Mammary epithelial cell (primary cell): ENCODE measurements at regions of chr5 and their contacts with region 1.

Region 1: GRCh38 chr5:132426525-132427138 is 57.1 kb downstream of the SLC22A5 start:
- DNase-seq: peak; percentile 95
- H3K4me3 ChIP-seq: no peak overlapping the region
- H3K27ac ChIP-seq: peak overlapping the region; percentile 92
- H3K4me1 ChIP-seq: peaks cover 63% of the 10 kb centered on the region
- H3K27me3 ChIP-seq: no peaks in the 10 kb centered on the region
- CTCF ChIP-seq: peak; percentile 27 to 44

Region 2: DNA sequence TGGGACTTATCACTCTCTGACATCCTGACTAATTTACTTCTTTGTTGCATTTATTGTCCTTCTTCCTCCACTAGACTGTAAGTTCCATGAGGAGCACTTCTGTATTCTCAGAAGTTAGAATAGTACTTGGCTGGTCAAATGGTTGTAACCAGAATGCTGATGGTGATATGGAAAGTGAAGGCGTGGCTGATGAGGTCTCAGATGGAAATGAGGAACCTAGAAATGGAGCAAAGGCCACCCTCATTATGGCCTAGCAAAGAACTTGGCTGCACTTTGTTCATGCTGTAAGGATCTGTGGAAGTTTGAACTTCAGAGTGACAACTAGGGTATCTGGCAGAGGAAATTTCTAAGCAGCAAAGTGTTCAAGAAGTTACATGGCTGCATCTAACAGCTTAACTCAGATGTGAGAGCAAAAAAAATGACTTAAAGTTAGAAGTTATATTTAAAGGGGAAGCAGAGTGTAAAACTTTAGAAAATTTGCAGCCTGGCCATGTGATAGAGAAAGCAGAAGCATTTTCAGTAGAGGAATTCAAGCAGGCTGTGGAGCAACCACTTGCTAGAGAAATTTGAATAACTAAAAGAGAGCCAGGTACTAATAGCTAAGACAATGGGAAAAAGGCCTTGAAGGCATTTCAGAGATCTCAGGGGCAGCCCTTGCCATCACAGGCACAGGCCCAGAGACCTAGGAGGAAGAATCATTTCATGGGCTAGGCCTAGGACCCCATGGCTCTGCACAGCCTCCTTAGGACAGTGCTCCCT is 72.1 kb before region 1 on chr5:
- CTCF ChIA-PET with region 1: no interaction called
- dilution Hi-C with region 1: no loop called
- in situ Hi-C with region 1: no loop called
- intact Hi-C with region 1: no loop called
- DNase-seq: no peak
- H3K4me3 ChIP-seq: no peak overlapping the region
- H3K27ac ChIP-seq: no peak overlapping the region
- H3K4me1 ChIP-seq: no peaks in the 10 kb centered on the region
- H3K27me3 ChIP-seq: no peaks in the 10 kb centered on the region
- CTCF ChIP-seq: no peak

Region 3: DNA sequence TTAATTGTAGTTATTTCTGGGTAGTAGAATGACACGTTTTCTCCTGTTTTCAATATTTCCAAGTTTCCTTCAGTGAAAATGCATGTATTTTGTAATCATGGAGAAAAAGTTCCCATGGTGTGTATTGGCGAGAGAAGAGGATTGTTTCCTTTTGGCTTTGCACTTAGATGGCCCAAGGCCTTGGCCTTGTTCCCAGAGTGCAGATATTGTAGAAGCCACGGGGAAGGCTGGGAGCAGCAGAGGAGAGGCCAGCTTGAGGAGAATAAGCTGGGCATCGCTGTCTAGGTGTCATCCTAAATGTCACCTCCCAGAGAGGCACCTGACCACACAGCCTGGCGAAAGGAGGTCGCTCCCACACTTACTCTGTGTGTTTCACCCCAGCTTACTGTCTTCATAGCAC is 20.0 kb after region 1 on chr5:
- CTCF ChIA-PET with region 1: no interaction called
- dilution Hi-C with region 1: no loop called
- in situ Hi-C with region 1: no loop called
- intact Hi-C with region 1: loop called (anchors 1 kb)
- DNase-seq: no peak
- H3K4me3 ChIP-seq: no peak overlapping the region
- H3K27ac ChIP-seq: no peak overlapping the region
- H3K4me1 ChIP-seq: peaks cover 25% of the 10 kb centered on the region
- H3K27me3 ChIP-seq: no peaks in the 10 kb centered on the region
- CTCF ChIP-seq: no peak

Region 4: GRCh38 chr5:132506094-132506692 is 79.6 kb after region 1 on chr5:
- CTCF ChIA-PET with region 1: no interaction called
- dilution Hi-C with region 1: no loop called
- in situ Hi-C with region 1: no loop called
- intact Hi-C with region 1: no loop called
- DNase-seq: peak; percentile 52
- H3K4me3 ChIP-seq: no peak overlapping the region
- H3K27ac ChIP-seq: no peak overlapping the region
- H3K4me1 ChIP-seq: peaks cover 11% of the 10 kb centered on the region
- H3K27me3 ChIP-seq: no peaks in the 10 kb centered on the region
- CTCF ChIP-seq: peak; percentile 58 to 62